CD8-positive, alpha-beta memory T cell (primary cell): ENCODE measurements at regions of chr1 and their contacts with region 1.

Region 1: DNA sequence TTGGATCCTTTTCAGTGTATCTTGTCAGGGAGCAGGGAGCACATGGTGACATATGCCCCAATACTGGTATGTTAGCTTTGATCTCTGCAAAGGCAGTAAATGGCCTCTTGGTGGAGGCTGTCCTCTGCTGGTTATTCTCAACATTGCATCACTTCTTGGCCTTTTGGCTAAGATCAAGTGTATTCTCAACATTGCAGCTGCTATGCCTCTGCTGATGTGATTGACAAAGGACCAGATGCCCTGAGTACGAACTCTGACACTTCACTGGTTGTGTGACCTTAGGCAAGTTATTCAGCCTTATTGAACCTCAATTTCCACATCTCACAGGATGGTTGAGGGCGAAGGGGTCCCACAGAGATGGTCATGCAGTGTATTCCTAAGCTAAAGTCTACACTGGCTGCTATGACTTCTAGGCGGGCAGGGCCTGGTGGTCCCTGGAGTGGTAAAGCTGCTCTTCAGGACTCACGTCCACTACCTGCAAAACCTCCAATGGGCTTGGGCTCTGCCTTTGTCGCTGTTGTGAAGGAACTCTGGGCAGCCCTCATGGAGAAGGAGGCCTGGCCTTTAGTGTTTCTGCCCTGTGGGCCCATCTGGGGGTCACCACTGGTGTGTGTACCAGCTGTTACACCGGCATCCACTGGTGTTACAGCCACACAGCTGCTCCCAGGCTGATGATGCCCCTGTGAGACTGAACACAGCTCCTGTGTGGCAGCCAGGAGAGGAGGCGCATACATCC is 64.8 kb downstream of the DNTTIP2 start:
- DNase-seq: peak in 4 of 5 donors; percentile 7 to 52 (median 21)
- H3K4me3 ChIP-seq: no peak overlapping the region
- H3K4me3 Mint-ChIP-seq: no peak overlapping the region
- H3K27ac ChIP-seq: no peak overlapping the region
- H3K27ac Mint-ChIP-seq: peak overlapping the region in 1 of 8 donors; percentile 25
- H3K4me1 ChIP-seq: peaks cover 18% of the 10 kb centered on the region
- H3K4me1 Mint-ChIP-seq: peaks cover 17 to 22% (median 21%) of the 10 kb centered on the region in 3 donors
- H3K27me3 ChIP-seq: no peaks in the 10 kb centered on the region
- H3K27me3 Mint-ChIP-seq: peaks cover 0 to 2% of the 10 kb centered on the region in 2 donors

Region 2: DNA sequence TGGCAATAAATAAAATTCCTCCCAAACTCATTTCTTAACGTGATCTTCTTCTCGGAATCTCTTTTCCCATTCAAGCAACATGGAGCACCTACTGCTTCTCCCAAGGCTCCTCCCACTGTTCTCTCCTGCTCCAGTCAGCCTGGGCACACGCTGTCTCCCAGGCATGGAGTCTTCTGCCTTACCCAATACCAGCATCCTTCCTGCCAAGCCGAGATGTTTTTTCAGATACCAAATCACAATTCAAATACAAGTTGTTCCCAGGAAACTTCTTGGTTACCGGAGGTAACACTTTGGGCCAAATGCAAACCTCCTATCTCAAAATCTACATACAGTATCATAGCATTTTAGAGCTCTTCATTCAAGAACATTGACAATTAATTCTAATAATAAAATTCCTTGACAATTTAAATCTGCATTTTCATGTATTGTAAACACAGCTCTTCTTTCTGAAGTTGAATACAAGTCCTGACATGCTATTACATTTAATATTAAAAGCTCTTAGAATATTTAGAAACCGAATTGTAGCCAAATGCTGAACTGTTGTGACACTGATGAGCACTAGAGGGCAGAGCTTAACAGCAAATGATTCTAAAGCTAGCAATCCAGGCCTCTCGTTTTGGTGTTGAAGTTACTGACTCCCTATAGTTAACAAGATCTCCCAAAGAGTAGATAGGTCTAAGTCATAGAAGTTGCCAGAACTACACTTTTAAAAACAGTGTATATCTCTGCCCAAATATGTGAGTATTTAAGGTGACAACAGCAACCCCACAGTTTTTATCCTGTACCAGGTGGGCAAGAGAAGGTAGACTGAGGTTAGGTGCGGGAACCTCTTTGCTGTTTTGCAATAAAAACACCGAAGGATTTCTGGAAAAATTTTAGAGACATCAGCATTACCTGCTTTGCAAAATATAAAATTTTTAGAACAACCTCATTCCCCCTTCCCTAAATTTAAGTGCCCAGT is 184.8 kb before region 1 on chr1:
- CTCF ChIA-PET with region 1: interaction called, 39 read pairs
- POLR2A ChIA-PET with region 1: no interaction called
- DNase-seq: peak in 3 of 5 donors; percentile 18 to 54 (median 47)
- H3K4me3 ChIP-seq: no peak overlapping the region
- H3K4me3 Mint-ChIP-seq: no peak overlapping the region
- H3K27ac ChIP-seq: no peak overlapping the region
- H3K27ac Mint-ChIP-seq: no peak overlapping the region
- H3K4me1 ChIP-seq: no peaks in the 10 kb centered on the region
- H3K4me1 Mint-ChIP-seq: no peaks in the 10 kb centered on the region
- H3K27me3 ChIP-seq: no peaks in the 10 kb centered on the region
- H3K27me3 Mint-ChIP-seq: peaks cover 0 to 2% of the 10 kb centered on the region in 2 donors

Region 3: DNA sequence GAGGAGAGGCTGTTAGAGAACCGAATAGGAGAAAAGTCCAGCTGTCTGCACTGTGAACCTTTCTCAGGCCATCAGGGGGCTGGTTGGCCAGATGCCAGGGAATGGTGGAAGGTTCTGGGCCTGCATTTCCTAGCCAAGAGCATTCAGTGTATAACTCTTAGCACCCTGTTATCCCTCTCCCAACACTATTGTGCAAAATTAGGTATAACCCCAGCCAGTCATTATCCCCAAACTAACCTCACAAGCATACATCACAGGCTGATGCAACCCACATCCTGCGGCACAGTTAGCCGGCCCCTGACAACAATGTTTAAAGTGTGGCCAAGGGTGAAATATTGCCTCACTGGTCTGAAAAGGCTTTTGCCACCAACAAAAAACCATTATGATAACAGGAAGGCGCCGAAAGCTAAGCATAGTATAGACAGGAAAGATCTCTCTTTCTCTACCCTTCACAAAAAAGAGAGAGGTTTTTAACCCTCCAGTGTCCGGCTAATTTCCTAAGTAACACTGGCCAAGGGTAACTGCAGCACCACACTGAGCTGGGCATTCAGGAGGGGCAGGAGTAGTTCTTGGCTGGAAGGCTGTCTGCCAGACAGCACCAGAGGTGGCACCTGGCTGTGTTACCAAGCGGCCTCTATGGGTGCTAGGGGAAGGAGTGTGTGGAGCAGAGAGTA is 55.2 kb before region 1 on chr1:
- CTCF ChIA-PET with region 1: no interaction called
- POLR2A ChIA-PET with region 1: no interaction called
- DNase-seq: peak in 2 of 5 donors; percentile 6 to 20
- H3K4me3 ChIP-seq: no peak overlapping the region
- H3K4me3 Mint-ChIP-seq: peak overlapping the region in 5 of 7 donors; percentile 0 to 64 (median 16)
- H3K27ac ChIP-seq: peak overlapping the region; percentile 8
- H3K27ac Mint-ChIP-seq: peak overlapping the region; percentile 25 to 91 (median 72)
- H3K4me1 ChIP-seq: peaks cover 5% of the 10 kb centered on the region
- H3K4me1 Mint-ChIP-seq: peaks cover 16 to 22% (median 17%) of the 10 kb centered on the region in 3 donors
- H3K27me3 ChIP-seq: no peaks in the 10 kb centered on the region
- H3K27me3 Mint-ChIP-seq: no peaks in the 10 kb centered on the region

Region 4: DNA sequence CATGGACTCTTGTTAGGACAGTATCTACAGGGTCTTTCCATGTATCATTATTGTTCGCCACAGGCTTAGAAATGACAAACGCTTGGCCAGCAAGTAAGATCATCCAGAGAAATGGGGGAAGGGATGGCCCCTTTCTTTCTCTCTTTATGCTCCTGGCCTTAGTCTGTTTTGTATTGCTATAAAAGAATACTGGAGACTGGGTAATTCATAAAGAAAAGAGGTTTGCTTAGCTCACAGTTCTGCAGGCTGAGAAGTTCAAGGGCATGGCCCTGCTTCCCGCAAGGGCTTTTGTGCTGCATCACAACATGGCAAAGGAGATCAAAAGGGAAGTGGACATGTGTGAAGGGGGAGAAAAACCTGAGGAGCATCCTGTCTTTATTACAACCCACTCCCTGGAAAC is 23.7 kb after region 1 on chr1:
- CTCF ChIA-PET with region 1: no interaction called
- POLR2A ChIA-PET with region 1: no interaction called
- DNase-seq: no peak
- H3K4me3 ChIP-seq: no peak overlapping the region
- H3K4me3 Mint-ChIP-seq: no peak overlapping the region
- H3K27ac ChIP-seq: no peak overlapping the region
- H3K27ac Mint-ChIP-seq: peak overlapping the region in 1 of 8 donors; percentile 7
- H3K4me1 ChIP-seq: no peaks in the 10 kb centered on the region
- H3K4me1 Mint-ChIP-seq: no peaks in the 10 kb centered on the region
- H3K27me3 ChIP-seq: no peaks in the 10 kb centered on the region
- H3K27me3 Mint-ChIP-seq: peaks cover 0 to 3% of the 10 kb centered on the region in 2 donors